ENCODE measurements at regions of chr3 and their contacts with region 1.

Region 1: GRCh38 chr3:168517249-168518071 is 421.7 kb upstream of the GOLIM4 start:
- DNase-seq: no peak
- H3K4me3 ChIP-seq: no peak overlapping the region
- H3K4me1 ChIP-seq: peaks cover 30% of the 10 kb centered on the region
- H3K27me3 ChIP-seq: no peaks in the 10 kb centered on the region

Region 2: DNA sequence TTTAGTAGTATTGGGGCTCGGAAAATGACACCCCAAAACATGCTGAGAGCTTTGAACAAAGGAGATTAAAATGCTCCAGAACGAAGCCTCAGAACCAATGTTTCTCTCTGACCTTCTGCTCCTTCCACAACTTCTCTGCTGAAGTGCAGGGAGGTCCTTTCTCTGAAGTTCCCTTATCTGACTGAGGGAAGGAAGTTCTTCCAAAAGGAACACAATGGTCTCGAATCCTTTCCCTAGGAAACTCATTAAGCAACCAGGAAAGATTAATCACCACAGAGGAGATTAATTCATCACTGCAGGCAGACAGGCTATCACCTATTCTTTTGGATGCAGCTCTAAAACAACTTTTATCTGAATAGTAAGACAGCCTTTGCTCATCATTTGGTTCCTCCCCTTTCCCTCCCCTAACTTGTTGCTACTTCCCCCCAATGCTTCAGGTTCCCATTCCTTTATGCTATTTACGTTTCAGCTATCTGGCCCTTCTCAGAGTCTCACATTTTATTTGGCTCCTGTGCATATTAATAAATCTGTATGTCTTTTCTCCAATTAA is 845.5 kb before region 1 on chr3:
- in situ Hi-C with region 1: no loop called
- DNase-seq: no peak
- H3K4me3 ChIP-seq: no peak overlapping the region
- H3K4me1 ChIP-seq: peaks cover 4% of the 10 kb centered on the region; the same call in 1 of the 2 replicates
- H3K27me3 ChIP-seq: no peaks in the 10 kb centered on the region

Region 3: GRCh38 chr3:167992381-167992780 is 525.1 kb before region 1 on chr3:
- in situ Hi-C with region 1: no loop called
- DNase-seq: no peak
- H3K4me3 ChIP-seq: no peak overlapping the region
- H3K4me1 ChIP-seq: no peaks in the 10 kb centered on the region
- H3K27me3 ChIP-seq: no peaks in the 10 kb centered on the region; the same call in 1 of the 2 replicates

Region 4: GRCh38 chr3:168620826-168621225 is 103.4 kb after region 1 on chr3:
- in situ Hi-C with region 1: loop called (anchors 5 kb)
- DNase-seq: peak; percentile 69 to 80
- H3K4me3 ChIP-seq: no peak overlapping the region
- H3K4me1 ChIP-seq: peaks cover 71% of the 10 kb centered on the region
- H3K27me3 ChIP-seq: no peaks in the 10 kb centered on the region

Region 5: DNA sequence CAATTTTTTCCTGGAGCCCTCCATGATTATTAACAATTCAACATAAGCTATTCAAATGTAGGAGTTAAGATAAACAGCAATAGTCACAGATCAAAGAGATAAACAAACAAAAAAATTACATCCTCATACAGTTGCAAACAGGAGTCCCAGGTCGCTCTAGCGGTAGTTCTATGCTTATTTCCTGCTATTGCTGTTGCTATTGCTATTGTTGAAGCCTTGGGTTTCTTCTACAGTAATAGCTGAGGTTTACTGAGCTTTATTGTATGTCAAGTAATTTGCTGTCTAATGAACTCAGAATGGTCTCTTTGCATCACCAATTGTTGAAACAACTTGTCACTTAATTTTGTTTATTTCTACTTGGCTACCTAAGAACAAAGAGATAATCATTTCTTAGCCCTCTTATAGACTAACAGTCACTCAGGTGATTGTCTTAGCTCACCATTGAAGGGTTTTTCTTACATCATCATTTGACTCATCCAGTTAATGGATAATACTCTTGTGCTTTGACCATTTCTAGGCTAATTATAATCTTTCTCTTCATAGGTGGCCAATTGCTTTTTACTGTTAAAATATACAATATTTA is 491.4 kb after region 1 on chr3:
- in situ Hi-C with region 1: no loop called
- DNase-seq: no peak
- H3K4me3 ChIP-seq: no peak overlapping the region
- H3K4me1 ChIP-seq: peaks cover 8% of the 10 kb centered on the region
- H3K27me3 ChIP-seq: no peaks in the 10 kb centered on the region

Measured in HAP-1 (cell line).